Activated T-helper 2 cell treated with anti-CD3 and anti-CD28 coated beads, Interferon-gamma antibody, Interleukin-2, Interleukin-4, amounts not matched to agents 10 μg/mL and 5 μg/mL and 100 μg/mL, durations not matched to agents 14 hours and 24 hours and 36 hours (primary cell): ENCODE measurements at regions of chr17 and their contacts with region 1.

Region 1: GRCh38 chr17:7484067-7484918 is at the start of gene POLR2A:
- DNase-seq: peak; percentile 95
- H3K4me3 Mint-ChIP-seq: peak within 1 kb of the TSS; percentile 98
- H3K27ac Mint-ChIP-seq: peak within 1 kb of the TSS; percentile 99
- H3K4me1 Mint-ChIP-seq: peaks cover 49% of the 10 kb centered on the region
- H3K27me3 Mint-ChIP-seq: no peaks in the 10 kb centered on the region
- total RNA-seq, gene POLR2A: 247 and 261 TPM in 2 replicates

Region 2: DNA sequence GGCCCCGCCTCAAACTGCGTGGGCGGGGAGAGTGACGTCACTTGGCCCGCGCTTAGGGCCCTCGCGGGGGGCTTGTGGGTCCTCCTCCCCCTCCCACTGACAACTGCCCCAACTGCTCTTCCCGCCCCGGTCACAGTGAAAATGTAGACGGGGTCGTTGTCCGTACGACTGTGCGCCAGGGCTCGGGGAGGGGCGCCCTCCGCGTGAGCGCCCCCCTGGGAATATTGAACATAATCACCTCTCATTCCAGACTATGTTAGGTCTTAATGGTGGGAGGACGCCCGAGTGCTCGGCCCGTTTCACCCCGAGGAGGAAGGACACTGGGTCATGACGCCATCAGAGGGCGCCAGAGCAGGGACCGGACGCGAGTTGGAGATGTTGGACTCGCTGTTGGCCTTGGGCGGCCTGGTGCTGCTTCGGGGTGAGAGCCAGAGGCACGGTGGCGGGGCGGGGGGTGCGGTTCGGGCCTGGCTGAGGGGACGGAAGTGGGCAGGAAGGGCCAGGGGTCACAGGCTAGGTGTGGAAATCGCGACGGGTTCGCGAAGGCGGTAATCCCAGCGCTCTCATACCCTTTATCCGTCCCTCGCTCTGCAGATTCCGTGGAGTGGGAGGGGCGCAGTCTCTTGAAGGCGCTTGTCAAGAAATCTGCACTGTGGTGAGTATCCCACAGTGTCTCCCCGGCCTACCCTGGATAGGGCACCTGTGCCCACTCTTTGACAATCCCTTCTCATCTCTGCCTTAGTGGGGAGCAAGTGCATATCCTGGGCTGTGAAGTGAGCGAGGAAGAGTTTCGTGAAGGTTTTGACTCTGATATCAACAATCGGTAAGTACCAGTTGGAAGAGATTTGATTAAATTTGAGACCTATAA is 231.9 kb before region 1 on chr17 and contains the start of gene ELP5:
- intact Hi-C with region 1: loop called (anchors 1 kb)
- DNase-seq: peak; percentile 88
- H3K4me3 Mint-ChIP-seq: peak within 1 kb of the TSS; percentile 92
- H3K27ac Mint-ChIP-seq: peak within 1 kb of the TSS; percentile 98
- H3K4me1 Mint-ChIP-seq: peaks cover 33% of the 10 kb centered on the region
- H3K27me3 Mint-ChIP-seq: no peaks in the 10 kb centered on the region
- total RNA-seq, gene ELP5: 64.8 and 65.3 TPM in 2 replicates

Region 3: GRCh38 chr17:7314719-7315569 is 169.3 kb before region 1 on chr17 and contains the start of gene GPS2:
- intact Hi-C with region 1: loop called (anchors 2 kb)
- DNase-seq: peak; percentile 91
- H3K4me3 Mint-ChIP-seq: peak within 1 kb of the TSS; percentile 91
- H3K27ac Mint-ChIP-seq: peak within 1 kb of the TSS; percentile 91
- H3K4me1 Mint-ChIP-seq: peaks cover 39% of the 10 kb centered on the region
- H3K27me3 Mint-ChIP-seq: no peaks in the 10 kb centered on the region
- total RNA-seq, gene GPS2: 57.6 and 64.9 TPM in 2 replicates

Region 4: DNA sequence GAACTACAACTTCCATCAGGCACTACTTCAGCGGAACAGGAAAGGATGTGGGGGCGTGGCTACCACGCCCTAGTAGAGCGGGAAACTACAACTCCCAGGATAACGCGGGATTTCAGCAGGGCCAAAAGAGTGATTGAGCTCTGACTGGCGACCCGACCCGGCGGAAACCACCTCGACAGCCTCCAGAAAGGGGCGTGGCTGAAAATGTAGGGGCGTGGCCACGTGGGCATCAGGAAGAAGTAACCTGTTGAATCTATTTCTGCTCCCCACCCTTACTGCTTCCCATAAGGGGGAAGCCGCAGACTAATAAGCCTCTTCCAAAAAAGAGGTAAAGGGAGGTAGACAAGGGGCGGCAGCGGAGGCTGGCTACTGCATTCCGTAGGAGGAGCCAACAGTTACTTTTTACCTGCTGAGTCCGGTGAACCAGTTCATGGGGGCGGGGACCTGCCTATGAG is 49.0 kb before region 1 on chr17 and contains the start of gene TMEM102:
- intact Hi-C with region 1: loop called (anchors 1 kb)
- DNase-seq: peak; percentile 98
- H3K4me3 Mint-ChIP-seq: peak within 1 kb of the TSS; percentile 85
- H3K27ac Mint-ChIP-seq: peak within 1 kb of the TSS; percentile 95
- H3K4me1 Mint-ChIP-seq: peaks cover 28% of the 10 kb centered on the region
- H3K27me3 Mint-ChIP-seq: peaks cover 10% of the 10 kb centered on the region
- total RNA-seq, gene TMEM102: 13.4 and 14.8 TPM in 2 replicates

Region 5: DNA sequence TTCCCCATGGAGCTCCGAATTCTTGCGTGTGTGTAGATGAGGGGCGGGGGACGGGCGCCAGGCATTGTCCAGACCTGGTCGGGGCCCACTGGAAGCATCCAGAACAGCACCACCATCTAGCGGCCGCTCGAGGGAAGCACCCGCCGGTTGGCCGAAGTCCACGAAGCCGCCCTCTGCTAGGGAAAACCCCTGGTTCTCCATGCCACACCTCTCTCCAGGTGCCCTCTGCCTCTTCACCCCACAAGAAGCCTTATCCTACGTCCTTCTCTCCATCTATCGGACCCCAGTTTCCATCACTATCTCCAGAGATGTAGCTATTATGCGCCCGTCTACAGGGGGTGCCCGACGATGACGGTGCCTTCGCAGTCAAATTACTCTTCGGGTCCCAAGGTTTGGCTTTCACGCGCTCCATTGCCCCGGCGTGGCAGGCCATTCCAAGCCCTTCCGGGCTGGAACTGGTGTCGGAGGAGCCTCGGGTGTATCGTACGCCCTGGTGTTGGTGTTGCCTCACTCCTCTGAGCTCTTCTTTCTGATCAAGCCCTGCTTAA is 76.8 kb after region 1 on chr17:
- intact Hi-C with region 1: loop called (anchors 1 kb)
- DNase-seq: peak; percentile 82
- H3K4me3 Mint-ChIP-seq: peak overlapping the region; percentile 92
- H3K27ac Mint-ChIP-seq: peak overlapping the region; percentile 90
- H3K4me1 Mint-ChIP-seq: peaks cover 34% of the 10 kb centered on the region
- H3K27me3 Mint-ChIP-seq: no peaks in the 10 kb centered on the region